A549 (cell line): ENCODE measurements at regions of chr19 and their contacts with region 1.

Region 1: GRCh38 chr19:55146078-55146704 is 2.8 kb downstream of the TNNT1 start:
- DNase-seq: peak; percentile 85 to 91
- ATAC-seq: peak; percentile 73 to 83
- H3K4me3 ChIP-seq: peak overlapping the region; percentile 64
- H3K27ac ChIP-seq: peak overlapping the region; percentile 82 to 92
- H3K4me1 ChIP-seq: peaks cover 37% of the 10 kb centered on the region
- CTCF ChIP-seq: peak; percentile 94
- EP300 ChIP-seq: no peak
- POLR2A ChIP-seq: no peak
- RAD21 ChIP-seq: peak; percentile 56 to 59

Region 2: GRCh38 chr19:54731191-54731590 is 415.0 kb before region 1 on chr19:
- CTCF ChIA-PET with region 1: no interaction called
- POLR2A ChIA-PET with region 1: no interaction called
- DNase-seq: no peak
- ATAC-seq: no peak
- H3K4me3 ChIP-seq: no peak overlapping the region
- H3K27ac ChIP-seq: no peak overlapping the region
- H3K4me1 ChIP-seq: no peaks in the 10 kb centered on the region
- CTCF ChIP-seq: no peak
- EP300 ChIP-seq: no peak
- POLR2A ChIP-seq: no peak
- RAD21 ChIP-seq: no peak

Region 3: DNA sequence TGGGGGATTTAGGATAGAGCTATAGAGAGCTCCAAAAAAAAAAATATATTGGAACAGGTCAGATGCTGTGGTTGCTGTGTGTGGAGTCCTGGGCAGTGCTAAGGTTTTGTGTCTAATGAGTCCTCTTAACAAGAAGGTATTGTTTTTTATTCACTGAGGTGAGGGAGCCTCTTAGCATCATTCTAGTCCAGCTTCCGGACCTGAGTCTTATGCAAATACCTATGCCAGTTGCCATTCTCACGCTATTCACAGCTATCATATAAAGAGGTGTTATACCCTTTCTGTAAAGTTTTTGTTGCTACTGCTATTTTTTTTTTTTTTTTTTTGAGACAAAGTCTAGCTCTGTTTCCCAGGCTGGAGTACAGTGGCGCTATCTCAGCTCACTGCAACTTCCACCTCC is 178.6 kb before region 1 on chr19:
- CTCF ChIA-PET with region 1: no interaction called
- POLR2A ChIA-PET with region 1: no interaction called
- DNase-seq: no peak
- ATAC-seq: no peak
- H3K4me3 ChIP-seq: no peak overlapping the region
- H3K27ac ChIP-seq: no peak overlapping the region
- H3K4me1 ChIP-seq: peaks cover 6% of the 10 kb centered on the region; the same call in 1 of the 3 replicates
- CTCF ChIP-seq: no peak
- EP300 ChIP-seq: no peak
- POLR2A ChIP-seq: no peak
- RAD21 ChIP-seq: no peak

Region 4: GRCh38 chr19:55053735-55054134 is 92.5 kb before region 1 on chr19:
- CTCF ChIA-PET with region 1: no interaction called
- POLR2A ChIA-PET with region 1: no interaction called
- DNase-seq: no peak
- ATAC-seq: no peak
- H3K4me3 ChIP-seq: no peak overlapping the region
- H3K27ac ChIP-seq: no peak overlapping the region
- H3K4me1 ChIP-seq: no peaks in the 10 kb centered on the region
- CTCF ChIP-seq: no peak
- EP300 ChIP-seq: no peak
- POLR2A ChIP-seq: no peak
- RAD21 ChIP-seq: no peak

Region 5: DNA sequence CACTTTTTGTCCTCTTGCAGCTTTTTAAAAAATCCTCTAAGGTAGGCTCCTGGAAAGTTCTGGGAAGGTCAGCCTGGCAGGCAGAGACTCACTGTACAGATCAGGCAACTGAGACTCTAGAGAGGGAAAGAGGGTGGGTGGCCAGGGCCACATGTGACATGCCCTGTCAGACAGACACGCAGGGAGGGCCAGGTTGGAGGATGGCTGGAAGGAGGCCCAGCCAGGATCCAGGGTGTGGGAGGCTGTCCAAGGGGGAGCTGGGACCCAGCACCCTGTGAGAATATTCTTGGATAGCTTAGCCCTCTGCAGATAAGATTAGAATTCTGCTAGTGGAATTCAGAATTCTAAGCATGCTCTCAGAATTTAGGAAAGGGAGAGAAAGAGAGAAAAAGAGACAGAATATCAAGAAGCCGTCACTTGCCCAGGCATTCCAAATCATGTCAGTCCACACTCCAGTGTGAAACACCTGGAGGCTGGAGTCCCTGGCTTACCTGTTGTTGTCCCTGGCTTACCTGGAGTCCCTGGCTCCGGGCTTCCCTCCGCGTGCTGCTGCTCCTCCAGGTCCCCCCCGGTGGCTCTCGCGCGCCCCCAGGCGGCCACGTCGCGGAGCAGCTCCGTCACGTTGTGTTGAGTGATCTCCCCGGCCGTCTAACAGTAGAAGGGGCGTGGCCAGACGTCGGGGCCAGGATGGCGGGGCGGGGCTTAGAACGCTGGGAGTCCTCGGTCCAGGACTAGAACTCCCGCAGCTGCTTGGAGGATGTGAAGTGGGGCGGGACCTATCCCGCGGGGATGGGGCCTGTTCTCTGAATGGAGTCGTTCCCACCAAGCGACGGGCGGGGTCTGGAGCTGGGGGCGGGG is 14.2 kb after region 1 on chr19:
- CTCF ChIA-PET with region 1: interaction called, 123 read pairs
- POLR2A ChIA-PET with region 1: interaction called, 9 read pairs
- DNase-seq: peak; percentile 95 to 98
- ATAC-seq: peak; percentile 66 to 85
- H3K4me3 ChIP-seq: 0 out of 3 replicates have a peak overlapping the region, but pooled peaks have one; percentile 10
- H3K27ac ChIP-seq: peak overlapping the region in 1 of 2 experiments; percentile 69; a peak in 3 of 6 replicates
- H3K4me1 ChIP-seq: peaks cover 22% of the 10 kb centered on the region
- CTCF ChIP-seq: peak; percentile 98
- EP300 ChIP-seq: no peak
- POLR2A ChIP-seq: no peak
- RAD21 ChIP-seq: peak; percentile 90

Region 6: GRCh38 chr19:55289117-55289796 is 143.1 kb after region 1 on chr19:
- CTCF ChIA-PET with region 1: interaction called, 18 read pairs
- POLR2A ChIA-PET with region 1: no interaction called
- DNase-seq: peak in 1 of 2 experiments; percentile 51
- ATAC-seq: peak; percentile 15 to 49; a peak in 4 of 6 replicates
- H3K4me3 ChIP-seq: no peak overlapping the region
- H3K27ac ChIP-seq: no peak overlapping the region
- H3K4me1 ChIP-seq: peaks cover 13% of the 10 kb centered on the region; the same call in 1 of the 3 replicates
- CTCF ChIP-seq: no peak
- EP300 ChIP-seq: no peak
- POLR2A ChIP-seq: no peak
- RAD21 ChIP-seq: no peak

Region 7: GRCh38 chr19:55345818-55346724 is 199.9 kb after region 1 on chr19:
- CTCF ChIA-PET with region 1: interaction called, 11 read pairs
- POLR2A ChIA-PET with region 1: no interaction called
- DNase-seq: peak in 1 of 2 experiments; percentile 72
- ATAC-seq: peak; percentile 5 to 31; a peak in 4 of 6 replicates
- H3K4me3 ChIP-seq: no peak overlapping the region
- H3K27ac ChIP-seq: peak overlapping the region in 1 of 2 experiments; percentile 61; a peak in 3 of 6 replicates
- H3K4me1 ChIP-seq: peaks cover 26% of the 10 kb centered on the region
- CTCF ChIP-seq: no peak
- EP300 ChIP-seq: no peak
- POLR2A ChIP-seq: no peak
- RAD21 ChIP-seq: no peak

Region 8: DNA sequence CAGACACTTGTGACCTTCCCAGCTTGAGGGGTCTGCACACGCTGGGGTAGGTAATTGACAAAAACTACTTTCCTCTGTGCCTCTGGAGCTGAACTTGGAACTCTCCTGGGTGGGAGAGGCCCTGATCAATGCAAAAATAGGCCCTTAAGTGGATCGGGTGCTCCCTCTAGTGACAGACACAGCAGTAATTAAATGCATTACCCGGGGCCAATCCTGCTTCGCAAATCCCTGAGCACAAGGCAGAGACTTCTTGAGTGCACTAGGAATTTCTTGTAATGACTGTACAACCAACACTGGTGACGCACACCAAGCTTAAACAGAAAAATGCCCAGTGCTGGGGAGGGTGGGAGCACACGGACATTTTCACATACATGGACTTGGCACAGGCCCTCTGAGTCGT is 272.0 kb after region 1 on chr19:
- CTCF ChIA-PET with region 1: interaction called, 107 read pairs
- POLR2A ChIA-PET with region 1: no interaction called
- DNase-seq: peak; percentile 88 to 91
- ATAC-seq: peak; percentile 94 to 95
- H3K4me3 ChIP-seq: no peak overlapping the region
- H3K27ac ChIP-seq: peak overlapping the region in 1 of 2 experiments; percentile 6; a peak in 1 of 6 replicates
- H3K4me1 ChIP-seq: peaks cover 8% of the 10 kb centered on the region; the same call in 1 of the 3 replicates
- CTCF ChIP-seq: peak; percentile 95
- EP300 ChIP-seq: no peak
- POLR2A ChIP-seq: no peak
- RAD21 ChIP-seq: peak; percentile 97 to 99

Region 9: DNA sequence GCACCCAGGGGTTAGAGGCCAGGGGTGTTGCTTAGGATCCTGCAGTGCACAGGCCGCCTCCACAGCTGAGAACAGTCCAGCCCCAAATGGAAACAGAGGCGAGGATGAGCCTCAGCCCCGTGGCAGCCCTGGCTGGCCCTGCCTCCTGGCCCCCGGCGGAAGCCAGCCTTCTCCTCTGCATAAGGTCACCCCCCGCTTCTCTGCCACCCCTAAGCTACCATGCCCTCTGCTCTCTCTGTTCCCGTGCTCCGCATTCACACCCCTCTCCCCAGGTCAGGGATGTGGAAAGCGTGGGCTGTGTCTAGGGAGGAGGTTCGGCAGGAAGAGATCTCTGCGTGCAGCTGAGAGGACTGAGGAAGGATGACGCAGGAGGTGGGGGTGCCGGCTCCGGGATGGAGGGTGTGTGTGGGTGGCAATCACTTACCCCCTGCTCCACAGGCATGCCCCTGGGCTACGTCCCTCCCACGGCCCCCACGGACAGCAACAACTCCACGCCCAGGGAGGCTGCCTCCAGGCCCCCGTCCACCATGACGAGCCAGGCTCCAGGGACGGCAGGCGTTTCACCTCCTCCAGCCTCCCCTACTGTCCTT is 348.1 kb after region 1 on chr19:
- CTCF ChIA-PET with region 1: interaction called, 15 read pairs
- POLR2A ChIA-PET with region 1: no interaction called
- DNase-seq: no peak
- ATAC-seq: no peak
- H3K4me3 ChIP-seq: no peak overlapping the region
- H3K27ac ChIP-seq: no peak overlapping the region
- H3K4me1 ChIP-seq: peaks cover 26% of the 10 kb centered on the region; the same call in 2 of the 3 replicates
- CTCF ChIP-seq: no peak
- EP300 ChIP-seq: no peak
- POLR2A ChIP-seq: no peak
- RAD21 ChIP-seq: no peak

Region 10: GRCh38 chr19:55632463-55632834 is 486.3 kb after region 1 on chr19:
- CTCF ChIA-PET with region 1: interaction called, 46 read pairs
- POLR2A ChIA-PET with region 1: no interaction called
- DNase-seq: peak; percentile 80 to 99
- ATAC-seq: peak; percentile 70 to 81
- H3K4me3 ChIP-seq: no peak overlapping the region
- H3K27ac ChIP-seq: no peak overlapping the region
- H3K4me1 ChIP-seq: peaks cover 17% of the 10 kb centered on the region
- CTCF ChIP-seq: peak; percentile 91
- EP300 ChIP-seq: no peak
- POLR2A ChIP-seq: no peak
- RAD21 ChIP-seq: peak; percentile 62 to 82